ENCODE measurements at regions of chr7 and their contacts with region 1.

Region 1: DNA sequence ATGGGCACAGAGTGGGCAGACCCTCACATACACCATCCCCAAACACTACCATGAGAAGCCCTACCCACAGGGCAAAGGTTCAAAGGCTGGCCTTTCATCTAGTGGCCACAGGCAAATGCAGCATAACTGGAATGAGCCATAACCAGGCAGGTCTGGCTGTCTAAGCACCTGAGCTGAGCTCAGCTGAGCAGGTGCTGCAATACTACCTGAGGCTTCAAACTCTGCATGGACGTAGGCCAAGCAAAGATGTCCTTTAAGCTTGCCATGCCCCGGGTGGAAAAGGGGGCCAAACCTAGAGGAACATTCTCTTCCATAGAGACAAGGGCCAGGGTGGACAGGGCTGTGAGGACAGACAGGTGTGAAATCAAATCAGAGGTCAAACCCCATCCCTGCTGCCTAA is 65.3 kb upstream of the CAMK2B start:
- DNase-seq: no peak
- ATAC-seq: no peak
- H3K4me3 ChIP-seq: no peak overlapping the region
- H3K4me3 Mint-ChIP-seq: no peak overlapping the region
- H3K27ac ChIP-seq: no peak overlapping the region
- H3K27ac Mint-ChIP-seq: peak overlapping the region in 1 of 2 donors; percentile 22
- H3K4me1 ChIP-seq: no peaks in the 10 kb centered on the region
- H3K4me1 Mint-ChIP-seq: no peaks in the 10 kb centered on the region
- H3K27me3 ChIP-seq: no peaks in the 10 kb centered on the region
- H3K27me3 Mint-ChIP-seq: no peaks in the 10 kb centered on the region

Region 2: DNA sequence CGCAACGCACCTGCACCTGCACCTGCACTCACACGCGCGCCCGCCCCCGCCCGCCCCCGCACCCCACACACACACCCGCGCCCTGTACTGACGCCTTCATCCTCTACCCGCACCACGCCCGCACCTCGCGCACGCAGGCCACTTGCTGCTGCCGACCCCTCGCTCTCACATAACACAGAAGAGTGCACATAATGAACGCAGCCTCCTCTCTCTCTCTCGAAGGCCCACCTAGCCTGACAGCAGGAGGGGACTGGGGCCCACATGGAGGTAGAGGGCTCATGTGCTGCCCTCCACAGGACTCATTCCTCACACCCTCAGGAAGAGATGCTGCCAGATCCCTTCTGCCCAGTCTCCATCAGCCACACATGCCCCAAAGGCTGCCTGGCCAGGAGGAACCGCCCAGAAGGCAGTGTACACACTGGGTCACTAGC is 64.9 kb before region 1 on chr7:
- CTCF ChIA-PET with region 1: no interaction called
- POLR2A ChIA-PET with region 1: no interaction called
- DNase-seq: no peak
- ATAC-seq: no peak
- H3K4me3 ChIP-seq: no peak overlapping the region
- H3K4me3 Mint-ChIP-seq: peak overlapping the region; percentile 58 to 87 (median 66)
- H3K27ac ChIP-seq: no peak overlapping the region
- H3K27ac Mint-ChIP-seq: no peak overlapping the region
- H3K4me1 ChIP-seq: no peaks in the 10 kb centered on the region
- H3K4me1 Mint-ChIP-seq: peaks cover 6 to 10% (median 9%) of the 10 kb centered on the region in 3 donors
- H3K27me3 ChIP-seq: peaks cover 4 to 71% of the 10 kb centered on the region in 2 experiments
- H3K27me3 Mint-ChIP-seq: peaks cover 28 to 43% of the 10 kb centered on the region in 2 donors

Region 3: GRCh38 chr7:44477063-44477830 is 86.5 kb after region 1 on chr7:
- CTCF ChIA-PET with region 1: no interaction called
- POLR2A ChIA-PET with region 1: interaction called in 1 of 2 experiments, 11 read pairs
- DNase-seq: peak; percentile 16 to 82 (median 48)
- ATAC-seq: peak; percentile 82 to 92 (median 90)
- H3K4me3 ChIP-seq: no peak overlapping the region
- H3K4me3 Mint-ChIP-seq: no peak overlapping the region
- H3K27ac ChIP-seq: no peak overlapping the region
- H3K27ac Mint-ChIP-seq: peak overlapping the region in 1 of 2 donors; percentile 44
- H3K4me1 ChIP-seq: peaks cover 0 to 7% of the 10 kb centered on the region in 2 experiments
- H3K4me1 Mint-ChIP-seq: peaks cover 43 to 64% (median 60%) of the 10 kb centered on the region in 3 donors
- H3K27me3 ChIP-seq: no peaks in the 10 kb centered on the region
- H3K27me3 Mint-ChIP-seq: no peaks in the 10 kb centered on the region

Measured in T-cell (primary cell).